Activated T-helper 2 cell treated with anti-CD3 and anti-CD28 coated beads, Interferon-gamma antibody, Interleukin-2, Interleukin-4, amounts not matched to agents 10 μg/mL and 5 μg/mL and 100 μg/mL, durations not matched to agents 14 hours and 24 hours and 36 hours (primary cell): ENCODE measurements at regions of chrX and their contacts with region 1.

Region 1: GRCh38 chrX:572537-573124 is 58.0 kb upstream of the SHOX start:
- DNase-seq: no peak
- H3K4me3 Mint-ChIP-seq: no peak overlapping the region
- H3K27ac Mint-ChIP-seq: no peak overlapping the region
- H3K4me1 Mint-ChIP-seq: no peaks in the 10 kb centered on the region
- H3K27me3 Mint-ChIP-seq: no peaks in the 10 kb centered on the region

Region 2: DNA sequence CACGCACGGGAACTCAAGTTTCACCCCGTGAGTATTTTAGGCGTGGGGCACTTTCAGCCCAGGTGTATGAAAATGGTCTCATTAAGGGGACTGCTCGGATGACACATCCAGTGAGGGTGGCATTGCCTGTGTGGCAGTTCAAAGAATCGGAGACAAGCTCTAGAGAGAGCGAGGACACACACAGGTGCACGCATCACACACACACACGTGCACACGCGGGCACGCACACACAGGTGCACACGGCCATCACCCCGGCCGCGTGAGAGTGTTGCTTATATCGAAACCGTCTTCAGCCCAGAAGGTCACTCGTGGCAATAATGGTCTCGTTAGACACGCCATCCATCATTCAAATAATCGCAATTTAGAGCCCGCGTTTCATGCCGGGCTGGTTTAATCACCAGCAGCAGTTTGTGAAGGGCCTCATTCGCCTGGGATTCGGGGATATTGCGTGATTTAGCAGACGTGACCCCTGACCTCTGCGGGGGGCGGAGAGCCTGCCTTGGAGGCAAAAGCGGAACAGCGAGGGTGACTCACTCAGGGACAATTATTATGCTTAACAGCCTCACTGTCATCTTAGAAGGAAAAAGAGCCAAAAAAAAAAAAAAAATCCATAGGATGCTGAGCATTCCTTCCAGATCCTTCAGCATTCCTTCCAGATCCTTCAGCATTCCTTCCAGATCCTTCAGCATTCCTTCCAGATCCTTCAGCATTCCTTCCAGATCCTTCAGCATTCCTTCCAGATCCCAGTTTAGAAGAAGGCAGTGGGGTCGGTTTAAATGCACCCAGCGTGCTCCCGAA is 96.5 kb before region 1 on chrX:
- intact Hi-C with region 1: loop called (anchors 5 kb)
- DNase-seq: no peak
- H3K4me3 Mint-ChIP-seq: no peak overlapping the region
- H3K27ac Mint-ChIP-seq: no peak overlapping the region
- H3K4me1 Mint-ChIP-seq: no peaks in the 10 kb centered on the region
- H3K27me3 Mint-ChIP-seq: no peaks in the 10 kb centered on the region

Region 3: DNA sequence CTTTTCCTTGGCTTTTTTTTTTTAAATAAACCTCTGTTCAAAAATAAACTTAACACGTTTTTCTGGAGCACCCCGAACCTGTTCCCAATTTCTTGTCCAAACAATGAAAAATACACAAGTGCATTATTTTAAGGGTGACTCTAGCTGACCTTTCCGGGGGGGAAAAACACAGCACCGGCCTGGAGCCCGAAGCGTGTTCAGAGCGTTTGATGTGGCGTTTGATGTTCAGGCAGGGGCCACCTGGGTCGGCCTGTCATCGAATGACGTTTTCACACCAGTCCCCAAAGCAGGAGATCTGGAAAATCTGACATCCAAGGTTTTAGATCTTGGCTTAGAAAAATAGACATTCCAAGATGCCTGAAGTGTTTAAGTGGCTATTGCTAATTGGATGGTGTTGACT is 340.0 kb after region 1 on chrX:
- intact Hi-C with region 1: loop called (anchors 5 kb)
- DNase-seq: no peak
- H3K4me3 Mint-ChIP-seq: no peak overlapping the region
- H3K27ac Mint-ChIP-seq: no peak overlapping the region
- H3K4me1 Mint-ChIP-seq: no peaks in the 10 kb centered on the region
- H3K27me3 Mint-ChIP-seq: no peaks in the 10 kb centered on the region